Caco-2 (cell line): ENCODE measurements at regions of chr3 and their contacts with region 1.

Region 1: GRCh38 chr3:128680602-128681368 is 30.2 kb upstream of the RPN1 start:
- DNase-seq: peak; percentile 99
- H3K4me3 ChIP-seq: peak overlapping the region; percentile 88
- H3K4me3 Mint-ChIP-seq: peak overlapping the region; percentile 86
- H3K27ac Mint-ChIP-seq: peak overlapping the region; percentile 92
- H3K4me1 ChIP-seq: no peaks in the 10 kb centered on the region
- H3K4me1 Mint-ChIP-seq: peaks cover 5% of the 10 kb centered on the region
- H3K27me3 ChIP-seq: no peaks in the 10 kb centered on the region
- H3K27me3 Mint-ChIP-seq: no peaks in the 10 kb centered on the region
- CTCF ChIP-seq: peak; percentile 83 to 96

Region 2: DNA sequence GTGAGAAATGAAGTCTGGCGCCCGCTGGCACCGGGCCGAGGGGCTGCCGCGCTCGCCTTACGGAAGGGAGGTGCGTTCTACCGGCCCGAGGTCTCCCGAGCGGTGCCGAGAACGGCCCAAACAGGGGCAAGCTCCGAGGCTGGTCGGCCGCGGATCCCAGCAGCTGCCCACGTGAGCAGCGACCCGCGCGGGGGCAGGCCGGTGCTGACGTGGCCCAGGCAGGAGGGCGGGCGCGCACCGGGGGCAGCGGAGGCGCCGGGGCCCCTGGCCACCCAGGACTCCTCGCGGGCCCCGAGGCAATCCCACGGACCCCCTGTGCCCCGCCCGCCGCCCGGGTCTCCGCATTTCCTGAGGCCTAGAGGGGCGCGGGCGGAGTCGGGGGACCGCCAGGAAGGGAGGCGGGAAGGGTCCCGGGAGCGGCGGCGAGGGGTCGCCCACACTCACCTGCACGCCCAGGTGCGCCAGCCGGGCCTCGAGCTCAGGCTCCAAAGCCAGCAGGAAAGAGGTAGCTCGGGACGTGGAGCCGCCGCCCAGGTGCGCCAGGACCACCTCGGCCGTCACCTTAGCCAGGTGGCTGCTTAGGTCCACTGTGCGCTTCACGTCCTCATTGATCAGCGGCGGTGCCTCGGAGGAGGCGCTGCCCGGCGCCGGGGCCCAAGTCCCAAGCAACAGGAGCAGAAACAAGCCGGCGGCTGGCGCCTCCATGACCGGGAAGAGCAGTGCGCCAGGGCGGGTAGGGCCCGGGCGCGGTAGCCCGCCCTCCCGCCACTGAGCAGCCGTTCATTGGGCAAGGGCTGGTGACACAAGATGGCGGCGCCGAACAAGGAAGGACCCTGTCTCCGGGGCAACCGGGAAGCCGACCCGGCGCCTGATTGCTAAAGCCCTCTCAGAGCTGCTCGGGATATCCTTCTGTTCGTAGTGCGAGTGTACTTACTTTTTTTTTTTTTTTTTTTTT is 30.4 kb before region 1 on chr3 and contains the start of gene RPN1:
- CTCF ChIA-PET with region 1: interaction called, 10 read pairs
- POLR2A ChIA-PET with region 1: interaction called, 14 read pairs
- intact Hi-C with region 1: loop called (anchors 2 kb)
- DNase-seq: peak; percentile 96 to 97
- H3K4me3 ChIP-seq: peak within 1 kb of the TSS; percentile 100
- H3K4me3 Mint-ChIP-seq: peak within 1 kb of the TSS; percentile 81
- H3K27ac Mint-ChIP-seq: peak within 1 kb of the TSS; percentile 97
- H3K4me1 ChIP-seq: no peaks in the 10 kb centered on the region
- H3K4me1 Mint-ChIP-seq: no peaks in the 10 kb centered on the region
- H3K27me3 ChIP-seq: no peaks in the 10 kb centered on the region
- H3K27me3 Mint-ChIP-seq: no peaks in the 10 kb centered on the region
- CTCF ChIP-seq: no peak
- total RNA-seq, gene RPN1: 282 and 291 TPM in 2 replicates

Region 3: DNA sequence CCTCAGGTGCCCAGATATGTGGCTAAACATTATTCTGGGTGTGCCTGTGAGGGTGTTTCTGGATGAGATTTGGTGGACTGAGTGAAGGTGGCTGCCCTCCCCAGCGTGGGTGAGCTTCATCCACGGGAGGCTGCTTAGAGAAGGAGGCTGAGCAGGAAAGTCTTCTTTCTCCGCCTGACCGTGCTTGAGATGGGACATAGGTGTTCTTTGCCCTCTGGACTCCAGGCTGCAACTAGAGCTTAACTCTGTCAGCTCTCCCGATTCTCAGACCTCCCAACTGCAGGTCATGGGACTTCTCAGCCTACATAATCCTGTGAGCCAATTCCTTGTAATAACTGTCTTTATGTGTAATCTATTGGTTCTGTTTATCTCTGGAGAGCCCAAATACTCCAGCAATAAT is 79.3 kb after region 1 on chr3:
- CTCF ChIA-PET with region 1: interaction called, 10 read pairs
- POLR2A ChIA-PET with region 1: interaction called, 6 read pairs
- intact Hi-C with region 1: no loop called
- DNase-seq: no peak
- H3K4me3 ChIP-seq: no peak overlapping the region
- H3K4me3 Mint-ChIP-seq: no peak overlapping the region
- H3K27ac Mint-ChIP-seq: no peak overlapping the region
- H3K4me1 ChIP-seq: peaks cover 15% of the 10 kb centered on the region
- H3K4me1 Mint-ChIP-seq: peaks cover 14% of the 10 kb centered on the region
- H3K27me3 ChIP-seq: no peaks in the 10 kb centered on the region
- H3K27me3 Mint-ChIP-seq: no peaks in the 10 kb centered on the region
- CTCF ChIP-seq: no peak

Region 4: GRCh38 chr3:128794770-128795649 is 114.2 kb after region 1 on chr3:
- CTCF ChIA-PET with region 1: interaction called, 35 read pairs
- POLR2A ChIA-PET with region 1: interaction called, 6 read pairs
- intact Hi-C with region 1: loop called (anchors 1 kb)
- DNase-seq: peak; percentile 55 to 74
- H3K4me3 ChIP-seq: no peak overlapping the region
- H3K4me3 Mint-ChIP-seq: no peak overlapping the region
- H3K27ac Mint-ChIP-seq: no peak overlapping the region
- H3K4me1 ChIP-seq: no peaks in the 10 kb centered on the region
- H3K4me1 Mint-ChIP-seq: no peaks in the 10 kb centered on the region
- H3K27me3 ChIP-seq: no peaks in the 10 kb centered on the region
- H3K27me3 Mint-ChIP-seq: no peaks in the 10 kb centered on the region
- CTCF ChIP-seq: peak; percentile 75 to 78

Region 5: GRCh38 chr3:128879125-128879969 is 198.6 kb after region 1 on chr3 and contains the start of gene ACAD9:
- CTCF ChIA-PET with region 1: interaction called, 14 read pairs
- POLR2A ChIA-PET with region 1: interaction called, 12 read pairs
- intact Hi-C with region 1: no loop called
- DNase-seq: peak; percentile 98
- H3K4me3 ChIP-seq: peak within 1 kb of the TSS; percentile 89
- H3K4me3 Mint-ChIP-seq: peak within 1 kb of the TSS; percentile 79
- H3K27ac Mint-ChIP-seq: peak within 1 kb of the TSS; percentile 87
- H3K4me1 ChIP-seq: peaks cover 22% of the 10 kb centered on the region
- H3K4me1 Mint-ChIP-seq: peaks cover 30% of the 10 kb centered on the region
- H3K27me3 ChIP-seq: no peaks in the 10 kb centered on the region
- H3K27me3 Mint-ChIP-seq: no peaks in the 10 kb centered on the region
- CTCF ChIP-seq: no peak
- total RNA-seq, gene ACAD9: 60.0 and 60.7 TPM in 2 replicates

Region 6: DNA sequence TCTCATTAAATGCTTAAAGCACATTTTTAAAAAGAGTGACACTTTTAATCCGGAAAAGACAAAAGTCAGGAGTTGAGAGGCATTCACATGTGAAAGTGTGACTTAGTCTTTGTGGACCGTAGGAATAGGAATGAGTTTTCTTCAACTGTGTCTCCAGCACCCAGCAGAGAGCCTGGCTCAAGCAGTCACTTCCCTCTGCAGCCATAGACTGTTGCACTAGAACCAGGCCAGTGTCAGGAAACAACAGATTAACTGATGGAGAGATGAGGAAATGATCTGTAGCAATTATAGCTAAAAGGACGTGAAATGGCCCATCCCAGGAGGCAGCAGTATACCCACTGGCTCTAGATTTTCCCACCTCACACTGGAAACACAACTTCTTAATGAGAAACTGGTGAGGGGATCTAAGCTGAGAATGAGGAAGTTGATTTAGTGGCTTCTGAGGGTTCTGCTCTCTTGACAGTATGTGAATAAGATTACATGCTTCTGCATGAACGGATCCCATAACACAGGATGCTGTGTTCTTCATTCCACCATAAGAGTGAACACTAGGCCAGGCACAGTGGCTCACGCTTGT is 293.3 kb after region 1 on chr3:
- CTCF ChIA-PET with region 1: no interaction called
- POLR2A ChIA-PET with region 1: no interaction called
- intact Hi-C with region 1: no loop called
- DNase-seq: no peak
- H3K4me3 ChIP-seq: no peak overlapping the region
- H3K4me3 Mint-ChIP-seq: no peak overlapping the region
- H3K27ac Mint-ChIP-seq: no peak overlapping the region
- H3K4me1 ChIP-seq: no peaks in the 10 kb centered on the region
- H3K4me1 Mint-ChIP-seq: no peaks in the 10 kb centered on the region
- H3K27me3 ChIP-seq: no peaks in the 10 kb centered on the region
- H3K27me3 Mint-ChIP-seq: peaks cover 3% of the 10 kb centered on the region
- CTCF ChIP-seq: no peak